Activated CD4-positive, alpha-beta memory T cell treated with anti-CD3 and anti-CD28 coated beads for 36 hours (primary cell): ENCODE measurements at regions of chr5 and their contacts with region 1.

Region 1: DNA sequence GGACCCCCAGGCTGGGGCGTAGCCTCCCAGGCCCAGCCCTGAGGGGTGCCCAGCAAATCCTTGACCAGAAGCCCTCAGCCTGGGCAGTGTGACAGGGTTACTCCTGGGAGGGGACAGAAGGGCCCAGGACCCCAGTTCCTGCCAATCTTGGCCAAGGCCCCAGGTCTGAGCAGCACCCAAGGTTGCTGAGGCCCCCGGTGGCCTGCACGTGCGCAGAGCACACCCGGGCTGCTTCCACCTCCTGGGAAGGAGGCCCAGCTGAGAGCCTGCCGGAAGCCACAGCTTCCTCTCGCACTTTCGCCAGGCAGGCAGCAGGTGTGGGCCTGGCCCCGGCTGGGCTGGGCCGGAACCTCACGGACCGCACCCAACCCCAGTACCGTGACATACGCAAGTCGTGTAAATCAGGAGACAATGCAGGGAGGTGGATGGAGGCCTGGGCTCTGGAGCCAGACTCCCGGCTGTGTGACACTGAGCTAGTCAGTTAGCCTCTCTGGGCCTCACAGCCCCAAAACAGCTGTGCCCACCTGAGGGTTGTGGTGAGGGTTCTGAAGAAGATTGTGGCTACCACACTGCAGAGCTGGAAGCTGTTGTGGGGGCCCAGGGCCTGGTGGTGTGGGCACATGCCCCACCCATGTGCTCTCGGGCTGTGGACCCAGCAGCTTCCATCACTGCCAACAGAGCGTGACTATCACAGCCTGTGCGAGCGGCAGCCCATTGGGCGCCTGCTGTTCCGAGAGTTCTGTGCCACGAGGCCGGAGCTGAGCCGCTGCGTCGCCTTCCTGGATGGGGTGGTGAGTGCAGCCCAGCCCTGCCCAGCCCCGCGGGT is 5.1 kb downstream of the GRK6 start:
- DNase-seq: peak; percentile 84
- H3K4me3 Mint-ChIP-seq: peak overlapping the region; percentile 97
- H3K27ac Mint-ChIP-seq: peak overlapping the region; percentile 97
- H3K4me1 Mint-ChIP-seq: peaks cover 61% of the 10 kb centered on the region
- H3K27me3 Mint-ChIP-seq: no peaks in the 10 kb centered on the region

Region 2: DNA sequence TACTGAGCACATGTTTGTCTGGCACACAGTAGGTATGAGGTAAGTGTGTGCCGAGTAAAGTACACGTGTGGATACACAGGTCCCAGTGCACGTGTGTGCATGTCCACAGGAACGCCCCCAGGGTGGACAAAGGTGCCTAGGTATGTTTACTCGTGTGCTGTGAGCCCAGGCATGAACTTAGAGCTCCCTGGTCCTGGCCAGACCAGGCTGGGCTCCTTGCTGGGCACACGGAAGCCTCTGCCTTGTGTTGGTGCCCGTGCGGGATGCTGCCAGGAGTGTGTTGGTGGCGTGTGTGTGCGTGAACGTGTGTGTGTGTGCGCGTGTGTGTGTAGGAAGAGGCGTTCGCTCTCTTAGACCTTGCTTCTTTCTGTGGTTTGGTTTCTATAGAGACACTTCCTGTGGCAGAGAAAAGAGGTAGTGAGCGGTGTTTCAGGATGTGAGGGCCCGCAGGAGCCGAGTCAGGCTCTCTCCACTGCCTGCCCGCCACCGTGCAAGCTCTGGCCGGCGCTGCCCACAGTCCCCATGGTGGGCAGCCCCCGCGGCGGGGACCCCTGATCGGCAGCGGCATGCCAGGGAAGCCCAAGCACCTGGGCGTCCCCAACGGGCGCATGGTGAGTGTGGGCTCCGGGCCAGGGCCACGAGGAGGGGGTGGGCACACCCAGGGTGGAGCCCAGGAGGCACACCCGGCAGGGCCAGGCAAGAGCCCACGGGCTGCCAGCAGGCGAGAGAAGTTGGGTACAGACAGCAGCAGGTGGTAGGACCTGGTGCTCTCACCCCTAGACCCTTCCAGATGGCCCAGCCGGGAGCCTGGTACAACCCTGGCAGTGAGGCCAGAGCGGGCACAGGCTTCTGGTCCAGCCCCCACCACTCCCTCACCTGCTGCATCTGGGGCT is 73.8 kb before region 1 on chr5 and contains the start of gene RGS14:
- CTCF ChIA-PET with region 1: no interaction called
- POLR2A ChIA-PET with region 1: interaction called, 3 read pairs
- intact Hi-C with region 1: loop called (anchors 2 kb)
- DNase-seq: peak; percentile 77
- H3K4me3 Mint-ChIP-seq: peak within 1 kb of the TSS; percentile 81
- H3K27ac Mint-ChIP-seq: peak within 1 kb of the TSS; percentile 80
- H3K4me1 Mint-ChIP-seq: peaks cover 75% of the 10 kb centered on the region
- H3K27me3 Mint-ChIP-seq: no peaks in the 10 kb centered on the region
- total RNA-seq, gene RGS14: 43.9 to 47.2 TPM

Region 3: DNA sequence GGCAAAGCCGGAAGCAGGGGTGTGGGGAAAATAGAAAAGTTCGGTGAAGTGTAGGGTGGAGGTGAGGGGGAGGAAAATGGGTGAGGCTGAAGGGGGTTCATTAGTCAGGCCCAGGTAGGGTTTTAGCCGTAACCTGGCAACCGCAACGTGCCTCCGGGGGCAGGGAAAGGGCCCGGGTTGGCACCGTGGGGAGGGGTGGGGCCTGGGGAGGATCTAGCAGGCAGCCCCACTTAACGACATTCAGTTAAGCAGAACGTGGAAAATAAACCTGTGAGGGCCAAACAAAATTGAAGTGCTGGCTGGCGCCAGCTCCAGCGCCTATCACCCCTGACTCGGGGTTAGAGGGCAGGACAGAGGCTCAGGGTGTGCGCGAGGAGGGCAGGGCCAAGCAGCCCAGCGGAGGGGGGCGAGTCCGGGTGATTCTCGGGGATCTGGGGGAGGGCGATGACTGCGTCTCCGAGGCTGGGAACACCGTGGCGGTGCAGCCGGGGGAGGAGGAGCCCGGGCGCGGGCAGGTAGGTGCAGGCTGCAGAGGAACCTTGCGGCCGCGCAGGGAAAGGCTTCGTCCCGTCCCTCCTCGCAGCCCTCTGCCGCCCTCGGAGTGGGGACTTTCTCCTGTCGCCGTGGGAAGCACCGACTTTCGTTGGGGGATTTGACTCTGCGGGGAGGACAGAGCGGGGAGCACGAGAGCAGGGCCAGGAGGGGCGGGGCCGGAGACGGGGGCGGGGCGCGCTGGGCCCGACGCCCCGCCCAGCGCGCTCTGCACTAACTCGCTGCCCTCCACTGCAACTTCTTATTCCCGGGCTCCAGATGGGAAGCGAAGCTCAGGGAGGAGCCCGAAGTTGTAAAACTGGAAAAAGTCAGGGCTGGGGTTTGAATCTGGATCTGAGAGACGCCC is 68.7 kb before region 1 on chr5:
- CTCF ChIA-PET with region 1: no interaction called
- POLR2A ChIA-PET with region 1: interaction called, 4 read pairs
- intact Hi-C with region 1: loop called (anchors 2 kb)
- DNase-seq: peak; percentile 82
- H3K4me3 Mint-ChIP-seq: peak overlapping the region; percentile 69
- H3K27ac Mint-ChIP-seq: peak overlapping the region; percentile 51
- H3K4me1 Mint-ChIP-seq: peaks cover 73% of the 10 kb centered on the region
- H3K27me3 Mint-ChIP-seq: no peaks in the 10 kb centered on the region

Region 4: DNA sequence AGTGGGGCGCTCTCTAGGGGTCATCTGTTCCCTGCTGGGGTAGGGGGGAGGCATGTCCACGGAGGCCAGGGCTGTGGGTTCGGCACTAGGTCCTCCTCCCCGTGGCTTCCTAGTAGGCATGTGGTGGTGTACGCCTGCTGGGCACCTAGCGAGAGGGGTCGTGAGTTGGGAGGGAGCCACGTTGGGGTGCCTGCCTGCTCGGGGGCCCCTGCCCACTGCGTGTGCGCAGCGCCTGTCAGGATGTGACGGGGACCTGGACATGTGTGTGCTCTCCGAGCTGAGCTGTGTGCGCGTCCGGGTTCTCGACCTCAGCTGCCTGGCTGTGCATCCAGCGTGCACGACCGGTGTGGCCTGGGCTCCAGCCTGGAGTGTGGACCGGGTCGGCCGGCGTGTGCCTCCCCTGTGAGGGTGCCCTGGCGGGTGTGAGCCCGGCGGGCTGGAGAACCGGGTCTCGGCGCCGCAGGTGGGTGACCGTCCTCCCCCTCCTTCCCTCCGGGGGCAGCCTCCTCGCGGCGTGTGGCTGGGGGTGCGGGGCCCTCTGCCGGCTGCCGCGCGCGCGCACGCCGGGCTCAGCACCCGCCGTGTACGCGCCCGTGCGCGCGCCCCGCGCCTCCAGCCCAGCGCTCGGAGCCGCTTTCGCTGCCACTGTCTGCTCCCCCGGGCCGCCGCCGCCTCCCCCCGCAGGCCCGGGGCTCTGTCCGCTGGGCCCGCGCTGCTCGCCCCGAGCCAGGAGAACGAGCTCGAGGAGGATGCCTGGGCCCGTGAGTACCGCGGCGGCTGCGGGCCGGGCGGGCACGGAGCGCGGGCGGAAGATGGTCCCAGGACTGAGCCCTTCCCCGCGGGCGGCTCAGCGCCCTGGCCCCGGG is 14.9 kb after region 1 on chr5 and contains the start of gene PRR7:
- CTCF ChIA-PET with region 1: interaction called, 126 read pairs
- POLR2A ChIA-PET with region 1: interaction called, 319 read pairs
- intact Hi-C with region 1: loop called (anchors 1 kb)
- DNase-seq: peak; percentile 77
- H3K4me3 Mint-ChIP-seq: peak within 1 kb of the TSS; percentile 67
- H3K27ac Mint-ChIP-seq: peak within 1 kb of the TSS; percentile 81
- H3K4me1 Mint-ChIP-seq: peaks cover 48% of the 10 kb centered on the region
- H3K27me3 Mint-ChIP-seq: no peaks in the 10 kb centered on the region
- total RNA-seq, gene PRR7: 13.3 to 13.6 TPM